ENCODE measurements at regions of chr10 and their contacts with region 1.

Region 1: GRCh38 chr10:77391605-77392235 is 245.9 kb downstream of the KCNMA1 start:
- DNase-seq: peak in 2 of 3 donors; percentile 62 to 75
- ATAC-seq: peak; percentile 71 to 86 (median 80)
- H3K4me3 ChIP-seq: no peak overlapping the region
- H3K27ac ChIP-seq: no peak overlapping the region
- H3K4me1 ChIP-seq: no peaks in the 10 kb centered on the region
- H3K27me3 ChIP-seq: no peaks in the 10 kb centered on the region
- CTCF ChIP-seq: peak; percentile 44 to 62 (median 45)
- POLR2A ChIP-seq: no peak

Region 2: GRCh38 chr10:77173615-77174461 is 217.9 kb before region 1 on chr10:
- intact Hi-C with region 1: loop called in 1 of 2 experiments (anchors 5 kb)
- DNase-seq: peak in 2 of 3 donors; percentile 41 to 73
- ATAC-seq: peak; percentile 87 to 96 (median 93)
- H3K4me3 ChIP-seq: no peak overlapping the region
- H3K27ac ChIP-seq: no peak overlapping the region
- H3K4me1 ChIP-seq: no peaks in the 10 kb centered on the region
- H3K27me3 ChIP-seq: no peaks in the 10 kb centered on the region
- CTCF ChIP-seq: peak; percentile 82 to 92 (median 86)
- POLR2A ChIP-seq: no peak